Breast epithelium (tissue), 4 donors: ENCODE measurements at regions of chr2 and their contacts with region 1.

Region 1: DNA sequence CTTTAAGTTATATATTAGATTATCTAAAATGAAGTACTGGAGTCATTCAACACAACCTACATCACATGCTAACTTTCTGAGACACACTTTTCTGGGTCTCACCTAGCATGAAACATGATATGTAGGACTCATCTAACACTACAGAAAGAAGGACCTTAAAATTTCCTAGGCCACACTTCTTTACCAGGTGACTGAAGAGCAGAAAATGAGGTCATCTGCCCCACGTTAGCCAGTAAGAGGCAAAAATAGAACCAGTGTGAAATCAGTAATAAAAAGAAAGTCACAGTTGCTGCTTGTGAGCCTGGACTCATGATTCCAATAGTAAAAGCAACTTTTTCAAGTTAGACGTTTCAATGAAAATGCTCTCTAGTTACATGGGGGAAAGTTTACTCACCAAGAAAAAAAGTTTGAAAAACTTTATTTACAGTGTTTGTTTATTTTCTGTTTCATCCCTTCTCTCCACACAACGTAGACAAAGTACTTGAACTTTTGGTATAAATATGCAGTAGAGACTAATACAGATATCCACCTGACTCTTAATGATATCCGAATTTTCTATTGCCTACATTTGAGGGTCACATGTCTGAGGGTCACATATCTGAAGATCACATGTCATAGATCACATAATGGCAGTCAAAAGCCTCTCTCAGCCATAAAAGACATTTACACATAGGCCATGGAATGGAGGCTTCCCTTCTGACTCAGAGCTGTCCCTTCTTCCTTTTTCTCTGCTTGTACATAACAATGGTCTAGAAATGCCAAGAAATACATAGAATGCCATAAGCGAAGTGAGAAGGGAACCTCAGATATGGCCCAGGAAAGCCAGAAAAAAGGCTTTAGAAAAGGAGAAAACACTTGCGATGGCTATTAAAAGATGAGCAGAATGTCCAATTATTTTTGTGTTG is 362.9 kb downstream of the ZEB2 start:
- DNase-seq: no peak
- H3K4me3 ChIP-seq: no peak overlapping the region
- H3K27ac ChIP-seq: no peak overlapping the region
- H3K4me1 ChIP-seq: no peaks in the 10 kb centered on the region
- H3K27me3 ChIP-seq: no peaks in the 10 kb centered on the region
- CTCF ChIP-seq: no peak
- POLR2A ChIP-seq: no peak

Region 2: DNA sequence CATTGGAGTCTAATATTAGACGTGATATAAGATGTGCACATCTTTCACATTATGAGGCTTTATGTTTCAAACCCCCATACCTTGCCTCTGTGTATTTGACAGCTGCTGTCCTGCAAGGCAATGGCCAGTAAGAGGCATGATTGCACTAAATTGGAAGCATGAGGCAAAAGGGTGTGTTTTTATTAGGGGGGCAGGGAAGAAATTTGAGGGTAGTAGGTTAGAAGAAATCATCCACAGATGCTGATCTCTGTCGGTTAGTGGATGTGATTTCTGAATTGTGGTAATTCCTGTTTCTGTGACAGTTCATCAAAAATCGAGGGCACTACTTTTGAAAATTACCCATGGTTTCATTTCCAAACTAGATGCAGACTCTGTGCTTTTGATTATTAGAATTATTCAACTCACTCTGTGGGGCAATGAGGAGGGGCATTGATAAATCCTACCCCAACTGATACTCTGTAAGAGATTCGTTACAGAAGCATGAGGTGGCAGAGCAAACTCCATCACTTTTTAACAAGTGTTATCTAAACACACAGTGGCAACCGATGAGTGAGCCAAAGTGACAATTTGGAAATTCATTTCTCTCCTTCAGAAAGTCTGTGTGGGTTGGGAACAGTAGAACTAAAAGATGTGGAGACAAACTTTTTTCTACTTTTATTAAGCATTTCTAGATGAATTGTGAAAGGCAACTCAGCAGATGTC is 574.8 kb before region 1 on chr2:
- intact Hi-C with region 1: loop called (anchors 5 kb)
- DNase-seq: no peak
- H3K4me3 ChIP-seq: no peak overlapping the region
- H3K27ac ChIP-seq: no peak overlapping the region
- H3K4me1 ChIP-seq: no peaks in the 10 kb centered on the region
- H3K27me3 ChIP-seq: no peaks in the 10 kb centered on the region
- CTCF ChIP-seq: no peak
- POLR2A ChIP-seq: no peak

Region 3: DNA sequence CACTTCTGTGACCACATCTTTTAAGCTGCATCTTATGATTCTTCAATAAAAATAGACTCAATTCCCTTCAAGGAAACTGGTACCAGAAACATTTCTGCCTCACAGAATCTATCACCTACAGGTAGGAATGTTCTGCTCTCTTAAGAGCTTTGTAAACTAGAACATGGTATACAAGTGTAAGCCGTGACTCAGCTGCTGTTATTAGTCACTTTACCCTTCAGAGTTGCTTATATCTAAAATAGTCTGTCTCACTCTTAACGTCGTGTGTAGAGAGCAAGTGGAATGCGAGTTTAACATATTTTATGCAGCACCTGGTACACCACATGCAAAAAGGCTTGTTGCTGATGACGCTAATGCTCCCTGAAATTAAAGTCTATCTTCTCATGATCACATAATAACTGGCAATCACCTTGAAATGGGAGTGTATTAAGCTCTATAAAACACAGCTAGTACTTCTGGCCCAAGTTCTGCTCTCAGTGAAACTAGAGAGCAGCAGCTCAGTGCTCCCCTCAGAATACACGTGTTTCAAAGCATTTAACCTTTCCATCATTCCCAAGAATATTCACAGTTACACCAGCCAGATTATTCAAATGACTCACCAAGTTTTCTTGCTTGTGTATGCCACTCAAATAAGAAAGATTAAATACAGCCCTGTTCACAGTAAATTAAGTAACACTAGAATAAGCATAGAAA is 57.1 kb before region 1 on chr2:
- intact Hi-C with region 1: loop called (anchors 2 kb)
- DNase-seq: no peak
- H3K4me3 ChIP-seq: no peak overlapping the region
- H3K27ac ChIP-seq: no peak overlapping the region
- H3K4me1 ChIP-seq: no peaks in the 10 kb centered on the region
- H3K27me3 ChIP-seq: no peaks in the 10 kb centered on the region
- CTCF ChIP-seq: no peak
- POLR2A ChIP-seq: no peak

Region 4: GRCh38 chr2:144890828-144891227 is 733.8 kb after region 1 on chr2:
- intact Hi-C with region 1: no loop called
- DNase-seq: no peak
- H3K4me3 ChIP-seq: no peak overlapping the region
- H3K27ac ChIP-seq: no peak overlapping the region
- H3K4me1 ChIP-seq: no peaks in the 10 kb centered on the region
- H3K27me3 ChIP-seq: no peaks in the 10 kb centered on the region
- CTCF ChIP-seq: no peak
- POLR2A ChIP-seq: no peak